Heart right ventricle (tissue), 16 donors: ENCODE measurements at regions of chr1 and their contacts with region 1.

Region 1: GRCh38 chr1:204348722-204349121 is 11.0 kb downstream of the PLEKHA6 start:
- DNase-seq: peak; percentile 79 to 91
- ATAC-seq: peak; percentile 91 to 97 (median 96)
- H3K4me3 ChIP-seq: no peak overlapping the region
- H3K27ac ChIP-seq: peak overlapping the region; percentile 17 to 82 (median 70)
- H3K4me1 ChIP-seq: peaks cover 12 to 36% (median 24%) of the 10 kb centered on the region in 9 donors
- H3K27me3 ChIP-seq: peaks cover 0 to 5% (median 0%) of the 10 kb centered on the region in 7 donors
- CTCF ChIP-seq: no peak

Region 2: GRCh38 chr1:204296431-204296988 is 52.2 kb before region 1 on chr1:
- intact Hi-C with region 1: loop called in 1 of 10 experiments (anchors 5 kb)
- DNase-seq: no peak
- ATAC-seq: peak in 7 of 8 donors; percentile 31 to 82 (median 54)
- H3K4me3 ChIP-seq: no peak overlapping the region
- H3K27ac ChIP-seq: peak overlapping the region in 9 of 10 donors; percentile 35 to 85 (median 60)
- H3K4me1 ChIP-seq: peaks cover 22 to 76% (median 49%) of the 10 kb centered on the region in 9 donors
- H3K27me3 ChIP-seq: no peaks in the 10 kb centered on the region
- CTCF ChIP-seq: peak in 3 of 9 donors; percentile 18 to 34 (median 31)

Region 3: GRCh38 chr1:204335085-204335484 is 13.6 kb before region 1 on chr1:
- intact Hi-C with region 1: no loop called
- DNase-seq: no peak
- ATAC-seq: no peak
- H3K4me3 ChIP-seq: no peak overlapping the region
- H3K27ac ChIP-seq: no peak overlapping the region
- H3K4me1 ChIP-seq: peaks cover 0 to 15% (median 0%) of the 10 kb centered on the region in 9 donors
- H3K27me3 ChIP-seq: no peaks in the 10 kb centered on the region
- CTCF ChIP-seq: no peak